ENCODE measurements at regions of chr18 and their contacts with region 1.

Region 1: DNA sequence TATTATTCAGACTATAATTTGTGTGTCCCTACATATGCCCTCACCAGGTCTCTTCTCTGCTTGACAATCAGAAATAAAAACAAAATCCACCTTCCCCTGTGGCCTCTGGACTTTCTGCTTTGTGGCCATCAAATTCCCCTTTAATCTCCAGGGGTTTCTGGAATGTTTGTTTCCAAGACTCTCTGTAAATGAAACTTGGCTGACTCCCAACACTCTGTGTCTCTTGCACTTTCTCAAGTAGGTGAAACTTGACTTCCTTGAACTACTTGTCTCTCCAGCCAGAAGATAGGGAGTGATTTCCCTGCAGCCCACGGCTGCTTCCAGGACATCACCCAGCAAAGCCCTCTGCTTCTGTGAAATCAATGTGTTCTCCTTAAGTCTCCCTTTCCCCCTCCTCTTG is 54.1 kb upstream of the AQP4 start:
- DNase-seq: no peak
- ATAC-seq: no peak
- H3K4me3 ChIP-seq: no peak overlapping the region
- H3K27ac ChIP-seq: no peak overlapping the region
- H3K4me1 ChIP-seq: no peaks in the 10 kb centered on the region
- H3K27me3 ChIP-seq: no peaks in the 10 kb centered on the region; a peak in 1 of 4 replicates
- CTCF ChIP-seq: no peak
- EP300 ChIP-seq: no peak
- POLR2A ChIP-seq: no peak
- RAD21 ChIP-seq: no peak

Region 2: DNA sequence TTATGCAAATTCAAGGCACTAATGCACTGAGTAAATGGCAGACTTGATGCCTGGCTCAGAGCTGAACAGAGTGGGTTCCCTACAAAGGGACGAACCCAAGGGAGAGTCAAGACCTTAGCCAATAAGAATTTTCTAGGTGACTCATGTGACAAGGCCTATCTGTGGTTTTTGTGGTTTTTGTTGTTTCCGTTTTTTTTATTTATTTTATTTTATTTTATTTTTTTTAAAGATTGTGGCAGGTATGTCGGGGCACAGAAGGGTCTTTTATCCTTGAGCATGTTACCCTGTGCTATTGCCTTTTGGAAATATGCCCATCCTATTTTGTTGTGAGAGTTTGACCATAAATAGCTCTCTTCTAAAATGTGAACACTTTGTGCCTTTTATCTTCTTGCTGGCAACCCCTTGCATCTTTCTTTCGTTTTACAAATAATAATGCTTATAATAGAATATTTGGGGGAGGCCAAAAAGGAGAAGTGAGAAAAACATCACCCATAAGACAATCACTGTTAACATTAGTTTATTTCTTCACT is 59.2 kb after region 1 on chr18:
- CTCF ChIA-PET with region 1: no interaction called
- POLR2A ChIA-PET with region 1: no interaction called
- RAD21 ChIA-PET with region 1: no interaction called
- SMC1A ChIA-PET with region 1: no interaction called
- in situ Hi-C with region 1: loop called (anchors 10 kb)
- intact Hi-C with region 1: no loop called
- DNase-seq: peak; percentile 76
- ATAC-seq: peak; percentile 99
- H3K4me3 ChIP-seq: peak overlapping the region; percentile 82; the same call in 1 of the 2 replicates
- H3K27ac ChIP-seq: peak overlapping the region; percentile 81
- H3K4me1 ChIP-seq: peaks cover 8% of the 10 kb centered on the region; the same call in 1 of the 2 replicates
- H3K27me3 ChIP-seq: no peaks in the 10 kb centered on the region
- CTCF ChIP-seq: no peak
- EP300 ChIP-seq: peak in 1 of 2 experiments; percentile 55; a peak in 1 of 4 replicates
- POLR2A ChIP-seq: peak; percentile 43
- RAD21 ChIP-seq: no peak